Activated naive CD4-positive, alpha-beta T cell treated with anti-CD3 and anti-CD28 coated beads for 36 hours (primary cell): ENCODE measurements at regions of chr6 and their contacts with region 1.

Region 1: GRCh38 chr6:105402939-105403935 is at the start of gene PREP:
- DNase-seq: peak; percentile 82
- H3K4me3 Mint-ChIP-seq: peak within 1 kb of the TSS; percentile 88
- H3K27ac Mint-ChIP-seq: peak within 1 kb of the TSS; percentile 59
- H3K4me1 Mint-ChIP-seq: peaks cover 56% of the 10 kb centered on the region
- H3K27me3 Mint-ChIP-seq: peaks cover 5% of the 10 kb centered on the region
- total RNA-seq, gene PREP: 32.6 to 33.9 TPM

Region 2: GRCh38 chr6:104682722-104683643 is 720.3 kb before region 1 on chr6:
- CTCF ChIA-PET with region 1: no interaction called
- intact Hi-C with region 1: loop called (anchors 2 kb)
- DNase-seq: peak; percentile 82
- H3K4me3 Mint-ChIP-seq: no peak overlapping the region
- H3K27ac Mint-ChIP-seq: no peak overlapping the region
- H3K4me1 Mint-ChIP-seq: peaks cover 20% of the 10 kb centered on the region
- H3K27me3 Mint-ChIP-seq: no peaks in the 10 kb centered on the region

Region 3: GRCh38 chr6:104859225-104860146 is 543.8 kb before region 1 on chr6 and contains the start of gene HACE1:
- CTCF ChIA-PET with region 1: no interaction called
- intact Hi-C with region 1: loop called (anchors 1 kb)
- DNase-seq: peak; percentile 91
- H3K4me3 Mint-ChIP-seq: peak within 1 kb of the TSS; percentile 91
- H3K27ac Mint-ChIP-seq: peak within 1 kb of the TSS; percentile 73
- H3K4me1 Mint-ChIP-seq: peaks cover 17% of the 10 kb centered on the region
- H3K27me3 Mint-ChIP-seq: peaks cover 4% of the 10 kb centered on the region
- total RNA-seq, gene HACE1: 11.7 to 12.6 TPM

Region 4: DNA sequence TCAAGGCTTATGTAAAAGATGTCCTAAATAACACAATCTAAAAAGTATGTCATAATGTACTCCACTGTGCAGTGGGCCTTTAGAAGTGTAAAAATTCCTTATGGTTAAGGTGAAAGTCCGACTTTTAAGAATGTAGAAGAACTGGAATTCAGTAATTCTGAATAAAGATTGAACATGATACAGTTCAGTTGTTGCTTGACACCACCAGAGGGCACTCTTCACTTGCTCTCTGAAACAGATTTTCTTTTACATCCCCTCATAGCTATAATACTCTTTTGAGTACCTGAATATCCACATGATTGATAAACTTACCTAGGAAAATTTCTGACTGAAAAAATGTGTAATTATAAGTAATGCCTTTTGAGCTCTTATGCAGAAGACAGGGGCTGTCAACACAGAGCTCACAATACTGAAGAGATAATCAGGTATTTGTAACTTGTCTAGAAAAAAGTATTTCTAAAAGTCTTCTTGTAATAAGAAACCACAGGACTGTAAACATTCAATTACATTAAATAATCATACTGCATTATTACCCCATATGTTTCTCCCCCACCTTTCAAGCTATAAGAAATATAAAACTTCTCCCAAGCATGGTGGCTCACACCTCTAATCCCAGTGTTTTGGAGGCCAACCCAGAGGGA is 315.5 kb before region 1 on chr6:
- CTCF ChIA-PET with region 1: interaction called, 6 read pairs
- intact Hi-C with region 1: loop called (anchors 1 kb)
- DNase-seq: peak; percentile 53
- H3K4me3 Mint-ChIP-seq: no peak overlapping the region
- H3K27ac Mint-ChIP-seq: no peak overlapping the region
- H3K4me1 Mint-ChIP-seq: no peaks in the 10 kb centered on the region
- H3K27me3 Mint-ChIP-seq: peaks cover 4% of the 10 kb centered on the region

Region 5: DNA sequence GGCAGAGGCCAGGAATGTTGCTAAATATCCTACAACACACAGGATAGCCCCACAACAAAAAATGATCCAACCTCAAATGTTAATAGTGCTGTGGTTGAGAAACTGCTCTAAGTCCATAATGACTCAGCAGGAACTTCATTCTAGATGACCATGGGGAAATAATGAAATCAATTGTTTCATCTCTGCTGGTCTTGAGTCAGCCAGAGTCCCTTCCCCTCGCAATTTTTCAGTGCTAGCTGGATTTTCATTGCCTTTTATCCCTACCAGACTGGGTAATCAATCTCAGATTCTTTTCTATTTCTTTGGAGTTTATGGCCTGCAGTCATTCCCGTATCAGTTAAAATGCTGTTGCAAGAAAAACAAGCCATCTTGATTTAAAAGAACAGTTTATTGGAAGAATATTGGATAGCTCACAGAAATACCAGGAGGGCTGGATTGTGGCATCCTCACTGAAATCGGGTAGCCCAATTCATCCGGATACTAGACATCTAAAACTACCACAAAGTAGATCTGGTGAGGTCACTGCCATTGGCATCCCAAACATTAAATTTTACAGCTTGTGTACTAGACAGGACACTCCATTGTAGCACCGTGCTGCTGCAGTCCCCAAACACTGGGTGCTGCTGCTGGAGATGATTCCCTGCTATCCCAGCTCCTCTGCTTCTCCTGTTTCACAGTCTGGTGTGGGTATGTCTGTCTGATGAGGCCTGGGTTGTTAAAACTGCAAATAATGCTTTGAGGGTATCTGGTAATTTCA is 193.1 kb before region 1 on chr6:
- CTCF ChIA-PET with region 1: interaction called, 3 read pairs
- intact Hi-C with region 1: loop called (anchors 10 kb)
- DNase-seq: no peak
- H3K4me3 Mint-ChIP-seq: no peak overlapping the region
- H3K27ac Mint-ChIP-seq: no peak overlapping the region
- H3K4me1 Mint-ChIP-seq: peaks cover 3% of the 10 kb centered on the region
- H3K27me3 Mint-ChIP-seq: peaks cover 20% of the 10 kb centered on the region

Region 6: DNA sequence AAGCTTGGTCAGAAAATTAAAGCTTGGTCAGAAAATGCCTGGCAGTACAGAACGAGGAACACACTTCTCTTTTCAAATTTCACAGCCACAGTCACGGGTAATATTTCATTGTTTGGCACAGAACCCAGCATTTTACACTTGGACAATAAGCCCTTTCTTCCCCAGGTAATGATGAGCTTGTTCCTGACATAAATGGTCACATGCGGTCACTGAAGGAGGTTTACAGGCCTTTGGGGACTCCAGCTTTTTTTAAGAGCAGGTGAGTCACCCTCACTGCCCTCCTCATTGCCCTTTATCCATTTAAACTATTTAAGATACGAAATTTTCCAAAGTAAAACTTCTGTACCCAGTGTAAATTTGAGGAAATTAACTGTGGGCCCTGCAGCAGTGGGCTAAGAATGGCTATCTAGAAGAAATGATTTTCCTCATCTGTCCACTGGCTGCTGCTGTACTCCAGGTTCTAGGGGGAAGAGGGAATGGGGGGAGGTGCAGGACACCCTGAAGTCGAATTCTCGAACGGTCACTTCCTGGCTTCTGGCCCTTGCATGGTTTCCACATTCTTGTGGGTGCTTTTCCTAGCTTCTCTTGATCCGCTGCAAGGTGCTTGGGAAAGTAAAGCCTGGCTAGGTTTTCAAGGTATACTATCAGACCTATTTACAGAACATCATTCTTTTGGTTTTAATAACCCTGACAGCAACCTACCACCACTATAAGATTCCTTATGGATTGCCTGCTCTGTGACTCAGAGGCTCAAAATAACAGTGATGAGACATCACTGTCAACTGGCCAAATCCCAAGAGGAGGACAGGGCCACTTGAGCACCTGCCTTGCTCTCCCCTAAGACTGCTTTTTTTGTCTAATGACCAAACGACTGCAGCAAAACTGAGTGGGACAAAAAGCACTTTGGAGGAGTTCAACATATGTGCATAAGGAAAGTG is 76.1 kb before region 1 on chr6:
- CTCF ChIA-PET with region 1: no interaction called
- intact Hi-C with region 1: no loop called
- DNase-seq: no peak
- H3K4me3 Mint-ChIP-seq: no peak overlapping the region
- H3K27ac Mint-ChIP-seq: no peak overlapping the region
- H3K4me1 Mint-ChIP-seq: no peaks in the 10 kb centered on the region
- H3K27me3 Mint-ChIP-seq: no peaks in the 10 kb centered on the region

Region 7: DNA sequence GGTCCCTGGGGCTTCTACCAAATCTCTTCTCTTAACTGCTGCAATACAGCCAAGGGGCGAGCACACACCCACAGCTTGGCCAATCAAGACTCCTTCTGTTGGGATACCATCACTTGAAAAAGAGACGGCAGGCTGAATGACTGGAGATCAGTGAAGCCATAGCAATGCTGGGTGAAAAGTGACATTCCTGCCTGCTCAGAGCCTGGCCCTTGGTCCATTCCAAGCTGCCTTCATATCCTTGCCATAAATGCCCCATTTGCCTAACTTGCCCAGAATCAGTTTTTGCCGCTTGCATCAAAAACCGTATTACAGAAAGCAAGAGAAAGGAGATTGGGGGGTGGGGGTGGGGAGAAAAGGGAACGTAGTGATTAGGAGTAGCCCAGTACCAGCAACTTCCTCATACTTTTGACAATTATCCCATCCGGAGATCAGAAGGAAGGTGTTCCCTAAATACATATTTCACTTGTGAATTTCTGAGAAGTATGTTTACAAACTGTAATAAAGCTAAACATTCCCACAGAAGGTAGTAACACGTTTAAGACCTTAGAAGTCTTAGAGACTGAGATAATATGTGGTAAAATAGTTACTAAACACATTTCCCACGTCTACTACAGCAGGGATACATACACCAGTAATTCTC is 15.0 kb before region 1 on chr6:
- CTCF ChIA-PET with region 1: no interaction called
- intact Hi-C with region 1: no loop called
- DNase-seq: no peak
- H3K4me3 Mint-ChIP-seq: no peak overlapping the region
- H3K27ac Mint-ChIP-seq: no peak overlapping the region
- H3K4me1 Mint-ChIP-seq: peaks cover 11% of the 10 kb centered on the region
- H3K27me3 Mint-ChIP-seq: no peaks in the 10 kb centered on the region